GM18951 (cell line): ENCODE measurements at regions of chr1 and their contacts with region 1.

Region 1: DNA sequence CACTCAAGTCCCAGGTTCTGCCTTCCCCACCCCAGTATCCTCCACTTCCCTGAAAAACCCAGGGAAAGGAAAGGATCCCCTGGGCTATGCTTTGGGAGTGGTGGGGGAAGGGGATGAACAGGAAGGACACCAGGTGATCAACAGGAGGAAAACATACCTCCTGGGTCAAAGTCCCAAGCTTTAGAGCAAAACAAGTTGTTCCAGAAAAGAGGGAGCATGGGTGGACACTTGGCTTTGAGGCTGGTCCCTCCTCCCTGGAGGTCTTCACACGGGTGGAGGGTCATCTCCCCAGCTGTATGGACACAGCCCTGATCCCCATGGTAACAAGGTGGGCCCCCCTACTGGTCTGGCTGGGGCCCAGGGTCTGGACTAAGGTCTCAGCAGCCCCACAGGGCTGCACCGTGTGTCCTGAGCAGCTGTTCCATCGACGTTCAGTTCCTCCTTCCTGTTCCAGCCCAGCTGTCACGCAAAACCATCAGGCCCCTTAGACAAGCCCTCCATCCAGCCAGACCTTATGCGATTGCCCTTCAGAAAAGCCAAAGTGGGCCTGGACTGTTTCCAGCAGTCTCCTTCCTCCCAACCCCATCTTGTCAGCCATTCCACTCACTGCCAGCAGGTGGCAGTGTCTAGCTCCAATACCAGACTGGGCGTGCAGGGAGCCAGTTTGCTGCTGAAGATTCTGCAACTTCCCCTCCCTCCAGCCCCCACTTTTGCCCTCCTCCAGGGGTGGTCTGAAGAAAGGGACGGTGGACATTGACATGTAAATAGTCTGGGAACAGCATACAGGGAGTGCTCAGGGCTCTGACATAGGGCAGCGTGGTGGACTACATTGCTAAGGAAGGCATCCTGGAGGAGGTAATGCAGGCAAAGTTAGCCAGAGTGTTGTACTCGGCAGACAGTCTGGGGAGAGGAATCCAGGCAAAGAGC is 2.9 kb upstream of the PDZK1IP1 start:
- POLR2A ChIP-seq: no peak

Region 2: GRCh38 chr1:46556822-46557221 is 635.9 kb before region 1 on chr1:
- in situ Hi-C with region 1: no loop called
- POLR2A ChIP-seq: no peak

Region 3: DNA sequence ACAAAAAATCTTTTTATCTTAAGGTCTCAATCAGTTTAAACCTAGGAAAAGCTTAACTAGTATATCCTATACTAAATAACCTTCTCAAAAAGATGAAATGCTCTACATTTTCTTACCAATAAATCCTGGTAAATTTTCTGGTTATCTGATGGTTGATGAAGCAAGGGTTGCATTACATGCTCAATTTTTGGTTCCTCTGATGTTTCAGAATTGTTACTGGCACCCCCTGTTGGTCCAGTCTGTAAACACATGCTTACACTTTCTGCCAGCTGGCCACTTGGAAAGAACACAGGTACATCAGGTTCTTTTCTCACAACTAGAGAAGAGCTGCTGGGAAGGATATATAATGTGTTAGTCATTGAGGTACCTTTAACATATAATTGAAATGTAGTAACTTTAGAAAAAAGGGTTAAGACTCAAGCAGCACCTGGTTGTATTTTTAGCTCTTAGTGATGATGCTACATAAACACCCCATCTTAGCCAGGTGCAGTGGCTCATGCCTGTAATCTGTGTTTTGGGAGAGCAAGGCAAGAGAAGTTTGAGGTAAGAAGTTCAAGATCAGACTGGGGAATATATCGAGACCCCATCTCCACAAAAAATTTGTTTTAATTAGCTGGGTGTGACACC is 70.2 kb after region 1 on chr1:
- in situ Hi-C with region 1: loop called (anchors 5 kb)
- POLR2A ChIP-seq: no peak